AG04449 (cell line): ENCODE measurements at regions of chr2 and their contacts with region 1.

Region 1: GRCh38 chr2:176554101-176555048 is 285.1 kb downstream of the MTX2 start:
- DNase-seq: no peak
- H3K4me3 ChIP-seq: peak overlapping the region; percentile 50
- CTCF ChIP-seq: peak; percentile 52

Region 2: GRCh38 chr2:176126929-176127773 is 427.2 kb before region 1 on chr2:
- CTCF ChIA-PET with region 1: interaction called, 56 read pairs
- POLR2A ChIA-PET with region 1: interaction called, 4 read pairs
- DNase-seq: no peak
- H3K4me3 ChIP-seq: peak overlapping the region; percentile 13
- CTCF ChIP-seq: peak; percentile 57

Region 3: GRCh38 chr2:176146101-176146500 is 408.3 kb before region 1 on chr2:
- CTCF ChIA-PET with region 1: interaction called, 119 read pairs
- POLR2A ChIA-PET with region 1: interaction called, 16 read pairs
- DNase-seq: no peak
- H3K4me3 ChIP-seq: no peak overlapping the region
- CTCF ChIP-seq: no peak

Region 4: GRCh38 chr2:176157499-176158185 is 396.7 kb before region 1 on chr2:
- CTCF ChIA-PET with region 1: interaction called, 13 read pairs
- POLR2A ChIA-PET with region 1: interaction called, 3 read pairs
- DNase-seq: no peak
- H3K4me3 ChIP-seq: peak overlapping the region; percentile 57
- CTCF ChIP-seq: no peak

Region 5: DNA sequence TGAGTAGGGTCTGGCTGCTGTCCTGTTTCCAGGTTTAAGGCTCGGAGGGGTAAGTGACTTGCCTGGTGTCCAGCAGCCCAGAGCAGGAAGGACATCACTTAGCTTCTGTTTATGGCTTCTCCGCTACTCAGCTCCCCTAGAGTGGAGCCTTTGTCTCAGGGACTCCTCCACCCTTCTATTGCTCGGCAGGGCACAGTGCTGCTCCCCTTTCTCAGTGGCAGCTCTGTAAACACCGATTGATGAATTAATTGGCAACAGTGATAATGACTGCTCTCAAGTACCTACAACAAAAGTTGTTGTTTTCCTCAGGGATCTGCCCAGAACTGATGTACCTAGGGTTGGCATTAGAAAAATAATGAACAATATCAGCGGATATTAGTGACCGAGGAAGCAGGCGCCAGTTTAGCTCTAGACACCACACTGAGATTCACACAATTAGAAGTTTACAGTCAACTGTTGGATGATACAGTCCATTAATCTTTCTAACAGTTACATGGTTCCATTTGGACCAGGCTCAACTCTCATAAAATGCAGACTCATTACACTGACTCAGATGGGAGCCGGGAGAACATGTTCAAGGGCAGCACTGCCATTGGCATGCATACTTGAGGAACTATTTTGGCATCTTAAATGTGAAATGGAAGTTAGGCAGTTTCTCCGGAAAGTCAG is 19.4 kb before region 1 on chr2:
- CTCF ChIA-PET with region 1: interaction called, 25 read pairs
- POLR2A ChIA-PET with region 1: no interaction called
- DNase-seq: peak; percentile 62
- H3K4me3 ChIP-seq: no peak overlapping the region
- CTCF ChIP-seq: no peak

Region 6: GRCh38 chr2:176574484-176575236 is 20.3 kb after region 1 on chr2:
- CTCF ChIA-PET with region 1: interaction called, 17 read pairs
- POLR2A ChIA-PET with region 1: no interaction called
- DNase-seq: no peak
- H3K4me3 ChIP-seq: no peak overlapping the region
- CTCF ChIP-seq: no peak

Region 7: DNA sequence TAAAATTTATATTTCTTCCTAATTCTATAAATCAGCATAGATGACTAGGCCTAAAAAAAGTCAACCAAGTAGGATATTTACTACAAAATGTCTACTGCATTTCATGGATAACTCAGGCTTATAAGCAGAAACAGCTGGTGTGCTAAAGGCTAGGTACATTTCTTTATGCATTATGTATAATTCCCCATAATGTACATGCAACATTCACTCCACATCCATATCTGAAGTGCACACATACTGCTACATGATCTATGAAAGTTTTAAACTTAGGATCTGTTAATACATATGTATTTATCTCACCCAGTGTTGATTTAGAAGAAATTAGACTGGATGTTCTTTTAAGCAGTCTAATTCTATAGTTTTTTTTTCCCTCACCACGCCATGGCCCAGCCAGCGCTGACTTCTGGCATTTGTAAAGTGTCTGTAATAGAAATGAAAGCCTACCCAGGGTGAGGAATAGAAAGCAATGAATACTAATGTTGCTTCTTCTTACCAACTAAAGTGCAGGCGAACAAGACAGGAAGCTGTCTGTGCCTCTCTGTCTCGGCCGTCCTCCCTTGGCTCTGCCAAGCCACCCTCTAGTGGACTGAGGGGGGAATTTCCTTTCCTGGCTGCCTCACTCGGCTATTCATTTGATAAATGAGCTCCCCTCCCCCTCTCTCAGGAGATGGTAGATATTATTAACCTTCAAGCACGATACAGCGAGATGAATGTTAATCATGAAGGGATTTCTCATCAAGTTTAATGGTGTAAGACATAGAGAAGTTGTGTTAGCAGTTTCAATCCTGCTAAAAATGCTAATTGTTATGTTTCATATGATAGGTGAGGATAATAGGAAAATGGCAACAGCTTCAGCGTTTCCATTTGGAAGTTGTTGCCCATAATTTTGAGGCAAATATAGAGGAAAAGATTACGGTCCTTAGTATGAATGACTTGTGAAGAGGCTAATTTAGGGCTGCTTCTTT is 99.4 kb after region 1 on chr2:
- CTCF ChIA-PET with region 1: interaction called, 42 read pairs
- POLR2A ChIA-PET with region 1: no interaction called
- DNase-seq: no peak
- H3K4me3 ChIP-seq: no peak overlapping the region
- CTCF ChIP-seq: peak; percentile 86